Activated T-helper 2 cell treated with anti-CD3 and anti-CD28 coated beads, Interferon-gamma antibody, Interleukin-2, Interleukin-4, amounts not matched to agents 10 μg/mL and 5 μg/mL and 100 μg/mL, durations not matched to agents 14 hours and 24 hours and 36 hours (primary cell): ENCODE measurements at regions of chr10 and their contacts with region 1.

Region 1: DNA sequence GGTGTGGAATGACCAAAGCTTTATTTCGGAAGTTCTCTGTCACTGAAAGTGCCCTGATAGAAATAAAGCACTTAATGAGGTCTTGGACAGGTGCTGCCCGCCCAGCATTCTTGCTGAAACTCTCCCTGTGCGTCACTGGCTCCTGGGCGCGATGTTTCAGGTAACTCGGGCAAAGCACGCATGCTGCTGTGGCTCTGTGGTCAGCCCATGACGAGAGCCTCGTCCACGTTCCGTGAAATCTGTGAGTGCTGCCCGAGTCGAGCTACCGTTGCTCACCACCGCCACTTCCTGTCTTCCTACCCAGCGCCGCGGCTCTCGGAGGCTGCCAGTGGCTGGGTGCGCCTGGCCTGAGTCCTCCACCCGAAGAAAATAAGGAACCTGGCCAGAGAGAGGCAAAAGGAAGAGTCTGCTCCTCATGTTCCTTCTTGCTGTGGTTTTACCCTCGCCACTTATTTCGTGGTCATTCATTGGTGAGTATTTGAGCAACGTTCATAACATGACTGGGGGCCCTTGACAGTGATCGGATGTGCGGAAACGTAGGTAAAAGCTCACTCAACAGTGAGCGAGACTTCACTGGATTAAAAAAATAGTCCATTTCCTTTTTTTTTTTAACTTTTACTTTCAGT is 95.5 kb downstream of the MAP3K8 start:
- DNase-seq: peak; percentile 74
- H3K4me3 Mint-ChIP-seq: peak overlapping the region; percentile 64
- H3K27ac Mint-ChIP-seq: peak overlapping the region; percentile 79
- H3K4me1 Mint-ChIP-seq: peaks cover 62% of the 10 kb centered on the region
- H3K27me3 Mint-ChIP-seq: peaks cover 2% of the 10 kb centered on the region

Region 2: GRCh38 chr10:30502266-30503060 is 27.0 kb before region 1 on chr10:
- intact Hi-C with region 1: loop called (anchors 2 kb)
- DNase-seq: peak; percentile 65
- H3K4me3 Mint-ChIP-seq: peak overlapping the region; percentile 50
- H3K27ac Mint-ChIP-seq: peak overlapping the region; percentile 48
- H3K4me1 Mint-ChIP-seq: peaks cover 75% of the 10 kb centered on the region
- H3K27me3 Mint-ChIP-seq: peaks cover 5% of the 10 kb centered on the region

Region 3: GRCh38 chr10:30510169-30510930 is 19.1 kb before region 1 on chr10:
- intact Hi-C with region 1: loop called (anchors 1 kb)
- DNase-seq: no peak
- H3K4me3 Mint-ChIP-seq: no peak overlapping the region
- H3K27ac Mint-ChIP-seq: peak overlapping the region; percentile 62
- H3K4me1 Mint-ChIP-seq: peaks cover 37% of the 10 kb centered on the region
- H3K27me3 Mint-ChIP-seq: no peaks in the 10 kb centered on the region